MCF 10A (cell line): ENCODE measurements at regions of chr1 and their contacts with region 1.

Region 1: GRCh38 chr1:19033861-19034680 is 77.6 kb upstream of the IFFO2 start:
- DNase-seq: peak; percentile 89
- H3K4me3 Mint-ChIP-seq: peak overlapping the region; percentile 26
- H3K27ac Mint-ChIP-seq: peak overlapping the region; percentile 70
- H3K4me1 Mint-ChIP-seq: peaks cover 17% of the 10 kb centered on the region
- H3K27me3 Mint-ChIP-seq: no peaks in the 10 kb centered on the region
- CTCF ChIP-seq: no peak

Region 2: GRCh38 chr1:18956369-18957135 is 77.5 kb before region 1 on chr1 and contains the start of gene IFFO2:
- CTCF ChIA-PET with region 1: no interaction called
- POLR2A ChIA-PET with region 1: interaction called, 4 read pairs
- intact Hi-C with region 1: loop called (anchors 1 kb)
- DNase-seq: peak; percentile 91
- H3K4me3 Mint-ChIP-seq: peak within 1 kb of the TSS; percentile 74
- H3K27ac Mint-ChIP-seq: no peak within 1 kb of the TSS
- H3K4me1 Mint-ChIP-seq: peaks cover 19% of the 10 kb centered on the region
- H3K27me3 Mint-ChIP-seq: peaks cover 10% of the 10 kb centered on the region
- CTCF ChIP-seq: no peak
- total RNA-seq, gene IFFO2: 10.8 and 21.0 TPM in 2 replicates